ENCODE measurements at regions of chr7 and their contacts with region 1.

Region 1: GRCh38 chr7:50711257-50712175 is 71.2 kb downstream of the GRB10 start:
- DNase-seq: peak in 1 of 2 experiments; percentile 22
- H3K4me3 ChIP-seq: no peak overlapping the region
- H3K27ac ChIP-seq: no peak overlapping the region
- H3K4me1 ChIP-seq: peaks cover 72% of the 10 kb centered on the region
- H3K27me3 ChIP-seq: no peaks in the 10 kb centered on the region
- CTCF ChIP-seq: no peak

Region 2: DNA sequence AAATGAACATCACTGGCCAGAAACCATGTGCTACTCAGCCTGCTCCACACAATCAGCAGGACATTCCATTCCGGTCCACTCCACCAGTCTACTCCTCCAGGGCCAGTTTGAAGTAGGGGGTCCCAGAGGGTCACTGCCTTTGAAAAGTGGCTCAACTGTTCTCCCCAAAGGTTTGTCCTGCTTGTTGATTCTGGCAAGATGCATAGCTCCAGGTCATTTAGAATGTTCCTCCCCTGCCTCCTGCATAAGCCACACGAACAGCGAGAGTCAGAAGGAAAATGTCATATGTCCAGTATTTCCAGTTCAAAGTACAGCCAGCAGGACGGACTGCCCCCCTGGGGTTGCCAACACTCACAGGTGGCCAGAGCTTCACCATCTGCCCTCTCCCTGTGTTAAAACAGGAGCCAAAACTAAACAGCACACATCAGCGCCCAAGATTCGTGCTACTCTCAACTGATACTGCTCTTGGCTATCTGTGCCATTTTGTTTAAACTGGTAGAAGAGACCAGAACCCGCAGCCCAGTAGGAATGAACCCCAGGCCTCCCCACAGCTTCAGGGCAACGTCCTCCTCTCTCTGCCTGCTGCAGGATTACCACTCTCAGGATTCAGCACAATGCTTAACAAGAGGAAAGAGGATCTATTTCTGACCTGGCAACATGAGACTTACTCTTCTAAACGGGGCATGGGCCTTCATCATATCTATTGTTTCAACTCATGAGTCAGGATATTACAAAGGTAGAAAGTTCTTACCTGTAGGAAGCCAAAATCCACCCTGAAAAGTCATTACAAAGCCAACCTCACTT is 59.9 kb after region 1 on chr7:
- CTCF ChIA-PET with region 1: no interaction called
- POLR2A ChIA-PET with region 1: no interaction called
- intact Hi-C with region 1: loop called (anchors 5 kb)
- DNase-seq: peak; percentile 61 to 92
- H3K4me3 ChIP-seq: no peak overlapping the region
- H3K27ac ChIP-seq: no peak overlapping the region
- H3K4me1 ChIP-seq: peaks cover 29% of the 10 kb centered on the region
- H3K27me3 ChIP-seq: no peaks in the 10 kb centered on the region
- CTCF ChIP-seq: no peak

Region 3: GRCh38 chr7:51059504-51060142 is 348.1 kb after region 1 on chr7:
- CTCF ChIA-PET with region 1: no interaction called
- POLR2A ChIA-PET with region 1: interaction called, 13 read pairs
- intact Hi-C with region 1: no loop called
- DNase-seq: no peak
- H3K4me3 ChIP-seq: no peak overlapping the region
- H3K27ac ChIP-seq: no peak overlapping the region
- H3K4me1 ChIP-seq: no peaks in the 10 kb centered on the region
- H3K27me3 ChIP-seq: no peaks in the 10 kb centered on the region
- CTCF ChIP-seq: no peak